Activated T-helper 2 cell treated with anti-CD3 and anti-CD28 coated beads, Interferon-gamma antibody, Interleukin-2, Interleukin-4, amounts not matched to agents 10 μg/mL and 5 μg/mL and 100 μg/mL, durations not matched to agents 14 hours and 24 hours and 36 hours (primary cell): ENCODE measurements at regions of chr13 and their contacts with region 1.

Region 1: GRCh38 chr13:32427852-32428580 is at the start of gene N4BP2L1:
- DNase-seq: peak; percentile 76
- H3K4me3 Mint-ChIP-seq: peak within 1 kb of the TSS; percentile 98
- H3K27ac Mint-ChIP-seq: peak within 1 kb of the TSS; percentile 100
- H3K4me1 Mint-ChIP-seq: peaks cover 39% of the 10 kb centered on the region
- H3K27me3 Mint-ChIP-seq: no peaks in the 10 kb centered on the region
- total RNA-seq, gene N4BP2L1: 26.1 and 28.6 TPM in 2 replicates

Region 2: GRCh38 chr13:32315238-32316027 is 112.6 kb before region 1 on chr13 and contains the starts of genes BRCA2 and ZAR1L:
- intact Hi-C with region 1: loop called (anchors 1 kb)
- DNase-seq: peak; percentile 85
- H3K4me3 Mint-ChIP-seq: peak within 1 kb of the TSS; percentile 96
- H3K27ac Mint-ChIP-seq: peak within 1 kb of the TSS; percentile 100
- H3K4me1 Mint-ChIP-seq: peaks cover 32% of the 10 kb centered on the region
- H3K27me3 Mint-ChIP-seq: no peaks in the 10 kb centered on the region
- total RNA-seq, gene BRCA2: 18.6 and 19.4 TPM in 2 replicates
- total RNA-seq, gene ZAR1L: not detected in 2 replicates

Region 3: GRCh38 chr13:32381539-32381938 is 46.5 kb before region 1 on chr13:
- intact Hi-C with region 1: no loop called
- DNase-seq: no peak
- H3K4me3 Mint-ChIP-seq: no peak overlapping the region
- H3K27ac Mint-ChIP-seq: no peak overlapping the region
- H3K4me1 Mint-ChIP-seq: no peaks in the 10 kb centered on the region
- H3K27me3 Mint-ChIP-seq: no peaks in the 10 kb centered on the region

Region 4: DNA sequence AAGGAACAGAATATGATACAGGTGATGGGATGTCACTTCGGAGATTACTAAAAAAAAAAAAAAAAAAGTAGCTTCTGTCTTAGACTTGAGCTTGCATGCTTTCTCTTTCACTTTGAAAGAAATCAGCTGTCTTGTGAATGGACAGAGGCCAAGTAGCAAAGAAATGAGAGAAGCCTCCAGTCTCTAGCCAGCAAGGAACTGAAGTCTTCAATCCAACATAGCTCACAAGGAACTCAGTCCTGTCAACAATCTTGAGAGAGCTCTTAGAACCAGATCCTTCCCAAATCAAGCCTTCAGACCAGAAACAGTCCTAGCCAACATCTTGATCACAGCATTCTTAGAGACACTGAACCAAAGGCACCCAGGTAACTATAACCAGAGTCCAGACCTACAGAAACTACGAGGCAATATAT is 102.8 kb after region 1 on chr13:
- intact Hi-C with region 1: loop called (anchors 2 kb)
- DNase-seq: no peak
- H3K4me3 Mint-ChIP-seq: peak overlapping the region; percentile 68
- H3K27ac Mint-ChIP-seq: peak overlapping the region; percentile 73
- H3K4me1 Mint-ChIP-seq: peaks cover 52% of the 10 kb centered on the region
- H3K27me3 Mint-ChIP-seq: no peaks in the 10 kb centered on the region

Region 5: DNA sequence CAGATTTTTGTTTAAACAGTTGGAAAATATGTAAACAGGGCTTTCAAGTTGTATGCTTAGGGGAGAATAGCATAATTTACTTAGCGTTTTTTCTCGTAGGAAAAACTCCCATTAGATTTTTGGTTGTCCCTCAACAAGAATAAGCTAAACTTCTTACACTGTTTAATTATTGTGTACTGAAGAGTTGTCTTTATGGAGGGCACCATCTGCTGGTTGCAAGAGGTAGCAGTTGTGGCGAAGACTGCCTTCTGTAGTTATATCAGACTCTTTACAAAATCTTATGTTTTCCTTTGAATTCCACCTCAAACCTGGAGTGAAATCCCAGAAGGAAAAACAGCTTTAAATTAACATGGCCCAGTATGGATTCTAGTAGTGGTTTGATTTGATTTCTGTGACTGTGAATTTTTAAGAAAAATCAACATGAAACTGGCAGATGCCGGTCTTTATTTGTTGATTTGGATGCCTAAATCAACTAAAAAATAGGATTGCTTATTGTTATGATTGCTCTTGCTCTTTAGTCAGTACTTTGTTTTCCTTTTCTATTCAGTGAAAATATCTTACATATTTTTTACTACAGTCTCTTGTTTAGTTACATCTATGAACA is 211.6 kb after region 1 on chr13:
- intact Hi-C with region 1: loop called (anchors 2 kb)
- DNase-seq: no peak
- H3K4me3 Mint-ChIP-seq: no peak overlapping the region
- H3K27ac Mint-ChIP-seq: no peak overlapping the region
- H3K4me1 Mint-ChIP-seq: peaks cover 29% of the 10 kb centered on the region
- H3K27me3 Mint-ChIP-seq: no peaks in the 10 kb centered on the region